WTC11 (cell line): ENCODE measurements at regions of chr6 and their contacts with region 1.

Region 1: DNA sequence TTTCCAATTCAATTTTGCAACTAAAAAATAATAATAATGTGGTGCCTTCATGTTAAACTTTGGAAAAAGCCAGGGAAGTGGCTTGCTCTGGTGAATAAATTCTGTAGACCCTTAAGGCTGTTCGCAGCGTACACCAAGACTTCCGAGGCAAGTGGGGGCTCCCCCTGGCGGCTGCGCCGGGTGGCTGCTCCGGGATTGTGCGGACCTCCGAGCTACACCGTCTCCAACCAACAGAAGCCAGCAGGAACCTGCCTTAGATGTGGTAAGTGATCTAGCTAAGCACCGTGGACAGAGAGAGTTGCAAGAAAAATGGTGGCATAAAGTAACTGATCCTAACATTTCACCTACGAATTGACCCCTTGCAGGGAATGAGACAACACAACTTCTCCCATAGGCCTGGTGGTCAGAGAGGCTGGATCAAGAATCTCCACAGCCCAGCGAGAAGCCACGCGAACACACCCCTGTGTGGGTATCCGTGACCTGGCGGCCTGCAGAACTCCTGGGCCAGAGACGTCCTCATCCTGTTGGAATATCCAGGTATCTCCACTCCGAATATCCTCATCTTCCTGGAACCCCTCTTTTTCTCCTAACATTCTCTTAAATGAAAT is 69.6 kb downstream of the TBXT start:
- DNase-seq: peak; percentile 89
- ATAC-seq: peak; percentile 98
- H3K4me3 Mint-ChIP-seq: peak overlapping the region; percentile 74
- H3K27ac Mint-ChIP-seq: no peak overlapping the region
- H3K4me1 Mint-ChIP-seq: peaks cover 4% of the 10 kb centered on the region
- H3K27me3 Mint-ChIP-seq: peaks cover 21% of the 10 kb centered on the region
- CTCF ChIP-seq: peak; percentile 95

Region 2: DNA sequence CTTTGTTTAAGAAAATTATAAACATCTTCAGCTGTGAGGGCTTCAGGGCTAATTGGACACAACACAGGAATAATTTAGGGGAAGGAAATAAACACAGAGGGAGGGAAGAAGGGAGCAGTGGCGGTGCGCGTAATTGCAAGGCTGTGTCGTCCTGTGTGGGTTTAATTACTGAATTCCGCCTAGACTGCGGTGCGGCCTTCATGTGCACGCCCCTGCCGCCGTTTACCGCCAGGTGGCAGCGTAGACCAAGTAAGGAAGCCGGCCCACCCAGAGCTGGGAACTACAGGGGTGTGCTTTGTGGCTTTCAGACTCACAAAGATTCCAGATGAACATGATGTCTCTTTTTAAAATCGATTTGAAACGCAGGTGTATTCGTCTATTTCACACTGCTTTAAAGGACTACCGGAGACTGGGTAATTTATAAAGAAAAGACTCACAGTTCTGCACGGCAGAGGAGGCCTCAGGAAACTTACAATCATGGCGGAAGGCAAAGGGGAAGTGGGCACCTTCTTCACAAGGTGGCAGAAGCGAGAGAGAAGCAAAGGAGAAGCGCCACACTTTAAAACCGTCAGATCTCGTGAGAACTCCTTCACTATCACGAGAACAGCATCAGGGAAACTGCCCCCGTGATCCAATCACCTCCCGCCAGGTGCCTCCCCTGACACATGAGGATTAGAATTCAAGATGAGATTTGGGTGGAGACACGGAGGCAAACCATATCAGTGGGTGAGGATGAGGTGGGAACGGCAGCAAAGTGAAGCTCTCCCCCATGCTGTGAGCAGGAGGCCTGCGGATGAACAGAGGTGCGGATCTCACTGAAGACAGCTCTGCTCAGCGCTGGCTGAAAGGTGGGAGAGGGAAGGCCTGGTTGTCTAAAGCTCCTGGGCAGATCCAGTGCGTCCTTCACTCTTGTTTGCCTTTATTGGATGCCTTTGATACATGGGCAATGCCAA is 212.9 kb before region 1 on chr6:
- CTCF ChIA-PET with region 1: interaction called, 46 read pairs
- POLR2A ChIA-PET with region 1: no interaction called
- DNase-seq: peak; percentile 90
- ATAC-seq: peak; percentile 98
- H3K4me3 Mint-ChIP-seq: peak overlapping the region; percentile 15; the same call in 1 of the 2 replicates
- H3K27ac Mint-ChIP-seq: no peak overlapping the region
- H3K4me1 Mint-ChIP-seq: peaks cover 6% of the 10 kb centered on the region
- H3K27me3 Mint-ChIP-seq: peaks cover 11% of the 10 kb centered on the region; the same call in 1 of the 2 replicates
- CTCF ChIP-seq: peak; percentile 80

Region 3: GRCh38 chr6:165987483-165988301 is 110.3 kb before region 1 on chr6:
- CTCF ChIA-PET with region 1: interaction called, 11 read pairs
- POLR2A ChIA-PET with region 1: no interaction called
- DNase-seq: peak; percentile 63
- ATAC-seq: peak; percentile 58
- H3K4me3 Mint-ChIP-seq: peak overlapping the region; percentile 76
- H3K27ac Mint-ChIP-seq: no peak overlapping the region
- H3K4me1 Mint-ChIP-seq: peaks cover 24% of the 10 kb centered on the region
- H3K27me3 Mint-ChIP-seq: peaks cover 99% of the 10 kb centered on the region
- CTCF ChIP-seq: no peak

Region 4: DNA sequence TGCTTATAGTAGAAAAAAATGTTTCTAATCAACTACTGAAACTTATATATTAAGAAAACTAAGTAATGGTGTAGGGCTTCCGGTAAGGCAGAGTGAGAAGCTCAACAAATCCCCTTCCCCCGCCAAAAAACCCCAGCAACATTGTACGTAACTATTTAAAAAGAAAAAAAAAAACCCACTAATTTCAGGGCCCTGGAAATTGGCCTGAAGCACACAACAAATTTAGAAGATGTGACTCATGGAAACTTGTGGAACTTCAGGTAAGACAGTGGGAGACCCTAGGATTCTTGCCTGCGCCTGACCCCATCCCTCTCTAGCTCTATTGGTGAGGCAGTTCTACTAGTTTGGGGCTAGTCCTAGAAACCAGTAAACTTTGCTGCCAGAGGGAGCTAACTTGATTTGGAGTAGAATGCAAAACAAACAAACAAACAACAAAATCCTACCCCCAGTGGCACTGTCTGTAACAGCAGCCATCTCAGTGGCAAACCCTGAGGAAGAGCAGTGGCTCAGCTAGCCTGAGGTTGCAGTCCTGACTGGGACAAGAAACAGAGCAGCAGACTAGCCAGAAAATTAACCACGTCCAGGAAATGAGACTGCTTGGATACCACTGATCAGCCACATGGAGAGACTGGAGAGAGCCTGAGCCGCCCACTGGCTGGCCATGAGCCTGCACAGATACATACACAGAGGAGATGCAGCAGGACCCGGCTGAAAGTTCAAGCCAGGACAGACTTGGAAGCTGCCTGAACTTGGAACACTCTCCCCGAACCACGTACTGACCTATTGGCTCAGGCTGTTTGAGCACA is 65.5 kb before region 1 on chr6:
- CTCF ChIA-PET with region 1: interaction called, 23 read pairs
- POLR2A ChIA-PET with region 1: no interaction called
- DNase-seq: peak; percentile 42
- ATAC-seq: peak; percentile 98
- H3K4me3 Mint-ChIP-seq: no peak overlapping the region
- H3K27ac Mint-ChIP-seq: no peak overlapping the region
- H3K4me1 Mint-ChIP-seq: peaks cover 12% of the 10 kb centered on the region
- H3K27me3 Mint-ChIP-seq: peaks cover 3% of the 10 kb centered on the region; the same call in 1 of the 2 replicates
- CTCF ChIP-seq: no peak; the same call in none of the 2 replicates

Region 5: GRCh38 chr6:166087246-166087645 is 10.8 kb before region 1 on chr6:
- CTCF ChIA-PET with region 1: interaction called, 15 read pairs
- POLR2A ChIA-PET with region 1: no interaction called
- DNase-seq: no peak
- ATAC-seq: no peak
- H3K4me3 Mint-ChIP-seq: no peak overlapping the region
- H3K27ac Mint-ChIP-seq: no peak overlapping the region
- H3K4me1 Mint-ChIP-seq: no peaks in the 10 kb centered on the region
- H3K27me3 Mint-ChIP-seq: peaks cover 5% of the 10 kb centered on the region
- CTCF ChIP-seq: no peak